Activated T-helper 1 cell treated with anti-CD3 and anti-CD28 coated beads, Interleukin-12 subunit alpha, Interleukin-12 subunit beta, Interleukin-2, Interleukin-4 antibody, amounts not matched to agents 30 ng/mL and 10 ng/mL and 1 ng/mL, durations not matched to agents 14 hours and 24 hours and 36 hours (primary cell): ENCODE measurements at regions of chr3 and their contacts with region 1.

Region 1: DNA sequence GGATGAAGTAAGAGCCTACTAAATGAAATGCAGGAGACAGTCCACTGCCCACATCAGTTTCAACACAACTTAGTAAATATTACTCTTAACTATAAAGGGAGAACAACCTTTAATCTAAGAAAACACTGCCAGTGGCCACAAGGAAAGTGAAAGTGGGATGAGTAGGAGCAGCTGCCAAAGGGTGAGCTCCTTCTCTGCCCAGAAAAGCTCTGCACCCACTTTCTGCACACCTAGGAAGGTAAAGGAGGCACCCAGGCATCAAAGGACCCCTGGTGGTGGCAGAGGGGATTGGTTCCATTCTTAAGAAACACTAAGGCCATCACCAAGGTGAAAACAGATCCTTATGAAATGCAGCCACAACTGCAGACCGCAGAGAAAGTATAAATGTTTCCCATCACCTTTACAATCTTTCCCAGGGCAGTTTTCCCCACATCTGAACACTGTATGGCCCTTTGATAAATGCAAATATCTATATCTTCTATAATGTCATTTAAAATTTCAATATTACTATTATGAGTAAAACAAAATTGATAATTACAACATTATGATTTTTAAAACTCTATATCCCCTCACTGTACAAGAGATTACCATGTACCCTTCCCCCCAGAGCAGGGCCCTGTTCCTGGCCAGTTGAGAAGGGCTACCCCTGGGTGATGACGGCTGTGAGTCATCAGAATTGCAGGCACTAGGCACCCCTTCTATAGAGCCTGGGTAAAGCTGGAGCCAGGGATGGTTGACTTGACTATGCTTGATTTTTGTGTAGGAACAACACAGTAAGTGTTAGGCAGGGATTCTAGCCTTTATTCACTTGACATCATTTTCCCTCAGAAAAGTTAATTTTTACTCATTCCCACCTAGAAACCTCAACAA is 92.0 kb downstream of the SNRK start:
- DNase-seq: peak; percentile 52
- H3K4me3 Mint-ChIP-seq: no peak overlapping the region
- H3K27ac Mint-ChIP-seq: no peak overlapping the region
- H3K4me1 Mint-ChIP-seq: peaks cover 17% of the 10 kb centered on the region
- H3K27me3 Mint-ChIP-seq: peaks cover 4% of the 10 kb centered on the region

Region 2: GRCh38 chr3:42961633-42962032 is 416.7 kb before region 1 on chr3:
- intact Hi-C with region 1: loop called (anchors 2 kb)
- DNase-seq: no peak
- H3K4me3 Mint-ChIP-seq: no peak overlapping the region
- H3K27ac Mint-ChIP-seq: no peak overlapping the region
- H3K4me1 Mint-ChIP-seq: no peaks in the 10 kb centered on the region
- H3K27me3 Mint-ChIP-seq: peaks cover 2% of the 10 kb centered on the region

Region 3: DNA sequence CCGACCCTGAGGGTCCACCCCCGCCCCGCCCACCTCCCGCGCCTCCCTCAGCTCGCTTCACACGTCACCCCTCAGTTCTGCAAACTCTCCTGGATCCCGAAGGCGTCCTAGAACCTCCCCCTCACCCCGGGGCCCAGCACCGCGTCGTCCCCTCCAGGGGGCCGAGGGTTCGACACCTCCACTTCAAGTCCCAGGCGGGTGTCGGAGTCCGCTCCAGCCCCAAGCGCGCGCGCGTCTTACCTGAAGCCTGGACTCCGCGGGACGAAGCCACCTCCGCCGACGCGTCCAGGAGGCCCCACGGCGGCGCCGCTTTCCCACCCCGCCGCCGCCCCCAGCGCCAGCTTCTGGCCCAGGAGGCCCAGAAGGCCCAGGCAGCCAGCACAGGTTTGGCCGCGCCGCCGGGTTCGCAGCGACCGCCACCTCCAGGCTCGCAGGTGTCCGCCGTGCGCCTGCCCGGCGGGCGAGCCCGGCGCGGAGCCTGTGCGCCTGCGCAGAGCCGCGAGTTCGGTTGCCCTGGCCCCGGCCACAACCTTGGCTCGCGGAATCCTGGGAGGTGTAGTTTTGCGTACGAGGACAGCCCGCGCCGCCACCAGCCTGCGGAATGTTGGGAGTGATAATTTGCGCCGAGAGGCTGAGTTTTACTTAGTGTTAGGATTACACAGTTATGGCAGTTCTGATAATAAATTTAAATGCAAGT is 272.6 kb before region 1 on chr3 and contains the start of gene POMGNT2:
- intact Hi-C with region 1: loop called (anchors 5 kb)
- DNase-seq: peak; percentile 82
- H3K4me3 Mint-ChIP-seq: peak within 1 kb of the TSS; percentile 72
- H3K27ac Mint-ChIP-seq: no peak within 1 kb of the TSS
- H3K4me1 Mint-ChIP-seq: peaks cover 12% of the 10 kb centered on the region
- H3K27me3 Mint-ChIP-seq: peaks cover 4% of the 10 kb centered on the region
- total RNA-seq, gene POMGNT2: 8.3 and 9.8 TPM in 2 replicates

Region 4: GRCh38 chr3:43162230-43163084 is 215.8 kb before region 1 on chr3:
- intact Hi-C with region 1: loop called (anchors 1 kb)
- DNase-seq: peak; percentile 53
- H3K4me3 Mint-ChIP-seq: peak overlapping the region; percentile 72
- H3K27ac Mint-ChIP-seq: peak overlapping the region; percentile 83
- H3K4me1 Mint-ChIP-seq: peaks cover 23% of the 10 kb centered on the region
- H3K27me3 Mint-ChIP-seq: no peaks in the 10 kb centered on the region

Region 5: GRCh38 chr3:43223670-43224364 is 154.5 kb before region 1 on chr3:
- intact Hi-C with region 1: loop called (anchors 1 kb)
- DNase-seq: no peak
- H3K4me3 Mint-ChIP-seq: no peak overlapping the region
- H3K27ac Mint-ChIP-seq: no peak overlapping the region
- H3K4me1 Mint-ChIP-seq: peaks cover 45% of the 10 kb centered on the region
- H3K27me3 Mint-ChIP-seq: no peaks in the 10 kb centered on the region

Region 6: DNA sequence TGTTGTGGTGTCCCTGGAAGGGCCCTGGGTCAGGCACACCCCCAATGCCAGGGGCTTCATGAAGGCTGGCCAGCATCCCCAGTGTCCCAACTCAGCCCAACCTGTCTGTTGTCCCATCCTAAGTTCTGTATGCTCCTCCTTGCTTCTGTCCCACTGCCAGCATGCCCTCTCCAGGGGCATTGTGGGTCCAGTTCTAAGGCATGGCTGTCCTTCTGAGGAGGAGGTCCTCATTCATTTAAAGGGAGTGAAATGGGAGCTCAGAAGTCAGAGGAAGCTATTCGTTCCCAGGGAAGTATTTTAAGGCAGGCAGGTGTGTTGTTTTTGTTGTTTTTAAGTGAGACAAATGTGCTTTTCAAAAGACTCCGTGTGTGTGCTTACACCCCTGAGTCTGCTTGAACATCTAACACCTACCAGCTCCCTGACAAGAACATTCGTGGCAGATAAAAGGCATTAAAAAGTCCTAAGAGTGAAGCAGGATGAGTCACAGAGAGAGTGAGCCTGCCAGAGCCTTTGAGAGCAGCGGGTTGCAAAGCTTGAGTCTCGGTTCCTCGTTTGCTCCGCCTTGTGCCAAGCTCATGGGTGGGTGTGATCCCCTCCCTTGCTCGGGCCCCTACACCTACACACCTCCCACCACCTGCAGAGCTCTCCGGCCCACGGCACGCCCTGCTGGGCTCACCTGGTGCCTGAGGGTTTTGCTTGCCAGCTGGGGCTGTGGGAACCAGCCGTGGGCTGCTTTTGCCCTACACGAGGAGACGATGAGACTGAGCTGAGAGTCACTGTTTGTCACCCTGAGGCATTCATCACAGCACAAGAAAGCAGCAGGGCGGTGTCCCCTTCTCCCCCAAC is 679.9 kb after region 1 on chr3:
- intact Hi-C with region 1: no loop called
- DNase-seq: no peak
- H3K4me3 Mint-ChIP-seq: no peak overlapping the region
- H3K27ac Mint-ChIP-seq: no peak overlapping the region
- H3K4me1 Mint-ChIP-seq: peaks cover 5% of the 10 kb centered on the region
- H3K27me3 Mint-ChIP-seq: peaks cover 5% of the 10 kb centered on the region